Mammary epithelial cell (primary cell): ENCODE measurements at regions of chr20 and their contacts with region 1.

Region 1: GRCh38 chr20:17419479-17420041 is 111.6 kb downstream of the BFSP1 start:
- DNase-seq: no peak
- H3K4me3 ChIP-seq: no peak overlapping the region
- H3K27ac ChIP-seq: no peak overlapping the region
- H3K4me1 ChIP-seq: no peaks in the 10 kb centered on the region
- H3K27me3 ChIP-seq: peaks cover 5% of the 10 kb centered on the region
- CTCF ChIP-seq: no peak

Region 2: DNA sequence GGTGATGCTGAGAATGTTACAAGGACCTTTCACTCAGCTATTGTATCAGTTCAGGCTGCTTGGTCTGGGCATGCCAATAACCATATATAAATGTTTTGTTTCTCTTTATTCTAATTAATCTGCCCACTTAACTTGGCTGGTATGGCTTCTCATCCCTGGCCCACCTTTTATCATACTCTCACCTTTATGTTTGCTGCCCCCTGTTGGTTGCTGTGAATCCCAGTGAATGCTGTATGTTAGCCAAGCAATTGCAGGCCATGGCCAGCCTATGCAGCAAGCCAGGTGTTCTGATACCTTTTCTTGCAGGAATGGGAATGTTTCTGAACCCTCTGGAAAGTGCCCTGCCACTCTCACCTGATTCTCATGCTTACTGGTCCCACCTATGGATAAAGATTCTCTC is 138.1 kb before region 1 on chr20:
- CTCF ChIA-PET with region 1: no interaction called
- dilution Hi-C with region 1: no loop called
- in situ Hi-C with region 1: no loop called
- intact Hi-C with region 1: no loop called
- DNase-seq: peak; percentile 18
- H3K4me3 ChIP-seq: no peak overlapping the region
- H3K27ac ChIP-seq: no peak overlapping the region
- H3K4me1 ChIP-seq: no peaks in the 10 kb centered on the region
- H3K27me3 ChIP-seq: no peaks in the 10 kb centered on the region
- CTCF ChIP-seq: peak; percentile 43 to 45

Region 3: DNA sequence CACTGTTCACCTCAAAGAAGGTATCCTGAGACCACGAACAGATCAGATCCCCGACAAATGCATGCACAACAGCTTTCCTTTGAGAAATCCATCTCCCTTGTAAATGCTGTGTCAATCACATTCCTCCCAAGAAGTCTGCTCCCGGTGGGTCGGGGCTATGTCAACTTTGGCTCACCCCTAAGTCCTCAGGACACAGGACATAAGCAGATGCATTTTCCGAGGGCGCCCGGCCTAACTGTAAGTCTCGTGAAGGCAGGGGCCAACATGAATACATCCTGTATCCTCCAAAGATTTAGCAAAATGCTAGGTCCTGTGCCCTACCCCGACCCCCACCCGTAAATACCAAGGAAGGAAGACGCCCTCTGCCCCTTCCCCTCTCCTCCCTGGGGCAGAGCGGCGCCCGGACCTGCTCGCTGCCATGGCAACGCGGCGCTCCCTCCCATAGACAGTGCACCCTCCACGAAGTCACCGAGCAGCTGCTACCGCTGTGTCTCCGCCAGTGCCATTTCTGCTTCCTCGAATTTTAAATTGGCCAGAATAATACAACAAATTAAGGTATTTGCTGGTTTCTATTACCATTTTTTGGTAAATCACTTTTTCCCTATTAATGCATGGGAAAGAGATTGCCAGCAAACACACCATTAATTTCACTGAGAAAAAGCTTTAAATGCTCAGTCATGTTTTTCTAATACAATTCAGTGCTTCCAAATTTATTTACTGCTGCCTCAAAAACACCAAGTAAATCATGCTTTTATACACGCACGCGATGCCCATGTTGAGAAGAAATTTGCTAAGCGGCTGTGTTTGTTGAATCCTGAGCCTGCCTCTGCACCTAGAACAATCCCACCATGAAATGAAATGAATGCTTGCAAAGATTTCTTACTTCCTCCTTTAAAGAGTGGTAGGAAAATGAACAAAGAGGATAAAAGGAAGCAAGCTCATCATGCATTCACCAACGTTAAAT is 92.1 kb before region 1 on chr20:
- CTCF ChIA-PET with region 1: no interaction called
- dilution Hi-C with region 1: loop called (anchors 5 kb)
- in situ Hi-C with region 1: no loop called
- intact Hi-C with region 1: no loop called
- DNase-seq: no peak
- H3K4me3 ChIP-seq: no peak overlapping the region
- H3K27ac ChIP-seq: no peak overlapping the region
- H3K4me1 ChIP-seq: no peaks in the 10 kb centered on the region
- H3K27me3 ChIP-seq: no peaks in the 10 kb centered on the region
- CTCF ChIP-seq: no peak

Region 4: DNA sequence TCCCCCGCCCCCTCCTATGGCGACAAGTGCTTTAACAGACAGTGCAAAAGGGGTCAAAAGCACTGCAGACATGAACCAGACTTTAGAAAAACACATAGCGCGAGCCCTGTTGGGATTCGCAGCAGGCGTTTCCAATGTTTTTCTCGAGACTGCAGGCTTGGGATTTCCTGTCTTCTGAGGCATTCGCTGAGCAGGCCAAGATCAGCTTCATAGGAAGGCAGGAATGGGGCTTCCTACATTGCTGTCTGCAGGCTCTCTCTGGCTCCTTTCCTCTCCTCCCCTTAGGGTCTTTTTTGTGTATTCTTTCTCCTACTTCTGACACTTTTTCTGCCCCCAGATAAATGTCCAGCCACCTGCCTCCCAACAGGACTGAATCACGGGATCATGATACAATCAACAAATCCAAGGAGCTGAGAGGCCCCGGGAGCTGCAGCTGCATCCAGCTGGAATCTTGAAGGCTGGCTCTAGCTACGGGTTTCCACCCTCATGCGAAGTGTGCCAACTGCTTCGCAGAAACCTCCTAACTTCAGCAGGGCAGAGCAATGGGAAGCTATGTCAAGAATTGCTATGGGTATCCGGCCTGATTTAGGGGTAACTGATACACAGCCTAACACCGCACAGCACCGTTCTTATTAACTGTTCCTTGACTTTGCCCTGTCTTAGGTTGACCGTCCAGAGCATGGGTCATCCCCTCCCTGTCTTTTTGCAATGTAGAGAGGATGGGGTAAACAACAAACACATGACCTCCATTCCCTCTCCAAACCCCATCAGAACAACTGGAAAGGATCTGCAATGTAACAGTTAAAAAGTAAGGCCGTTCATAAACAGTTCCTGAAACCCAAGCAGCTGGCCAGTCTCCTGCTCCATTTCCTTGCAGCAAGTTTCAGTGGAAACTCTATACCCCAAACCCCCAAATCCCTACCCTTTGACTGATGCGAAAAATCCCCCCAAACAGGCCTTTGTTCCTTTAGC is 517.5 kb after region 1 on chr20:
- CTCF ChIA-PET with region 1: no interaction called
- dilution Hi-C with region 1: no loop called
- in situ Hi-C with region 1: no loop called
- intact Hi-C with region 1: no loop called
- DNase-seq: no peak
- H3K4me3 ChIP-seq: no peak overlapping the region
- H3K27ac ChIP-seq: no peak overlapping the region
- H3K4me1 ChIP-seq: no peaks in the 10 kb centered on the region
- H3K27me3 ChIP-seq: no peaks in the 10 kb centered on the region
- CTCF ChIP-seq: no peak